ENCODE measurements at regions of chrX and their contacts with region 1.

Region 1: GRCh38 chrX:129678614-129679195 is 23.9 kb upstream of the APLN start:
- DNase-seq: peak; percentile 1
- H3K4me3 ChIP-seq: peak overlapping the region in 1 of 3 experiments; percentile 25
- H3K27ac ChIP-seq: peak overlapping the region; percentile 15
- H3K4me1 ChIP-seq: peaks cover 19% of the 10 kb centered on the region
- H3K27me3 ChIP-seq: no peaks in the 10 kb centered on the region
- CTCF ChIP-seq: no peak
- POLR2A ChIP-seq: no peak

Region 2: GRCh38 chrX:129665910-129666644 is 12.6 kb before region 1 on chrX:
- CTCF ChIA-PET with region 1: no interaction called
- POLR2A ChIA-PET with region 1: interaction called, 3 read pairs
- dilution Hi-C with region 1: no loop called
- intact Hi-C with region 1: loop called (anchors 1 kb)
- DNase-seq: peak; percentile 87
- H3K4me3 ChIP-seq: no peak overlapping the region
- H3K27ac ChIP-seq: peak overlapping the region; percentile 88
- H3K4me1 ChIP-seq: peaks cover 56% of the 10 kb centered on the region
- H3K27me3 ChIP-seq: no peaks in the 10 kb centered on the region
- CTCF ChIP-seq: no peak
- POLR2A ChIP-seq: peak; percentile 2

Measured in endothelial cell of umbilical vein (primary cell).